ENCODE measurements at regions of chr7 and their contacts with region 1.

Region 1: DNA sequence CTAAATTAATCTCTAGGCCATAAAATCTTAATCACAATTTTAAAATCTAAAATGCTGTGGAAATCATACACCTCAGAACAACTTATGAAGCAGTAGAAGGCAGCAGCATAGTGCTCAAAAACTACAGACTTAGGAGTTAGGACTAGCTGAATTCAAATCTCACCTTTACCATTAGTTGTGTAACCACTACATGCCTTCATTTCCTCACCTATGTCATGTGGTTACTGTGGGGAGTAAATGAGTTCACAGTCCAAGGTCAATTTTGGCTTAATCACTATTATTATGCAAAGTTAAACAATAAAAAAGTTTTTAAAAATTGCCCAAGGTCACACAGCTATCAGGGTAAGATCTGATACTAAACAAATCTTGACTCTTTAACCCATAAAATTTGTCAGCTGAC is 37.0 kb downstream of the SNX13 start:
- DNase-seq: no peak
- H3K4me3 ChIP-seq: no peak overlapping the region
- CTCF ChIP-seq: no peak
- POLR2A ChIP-seq: no peak

Region 2: GRCh38 chr7:16106300-16106699 is 1797.0 kb before region 1 on chr7:
- intact Hi-C with region 1: loop called (anchors 5 kb)
- DNase-seq: no peak
- H3K4me3 ChIP-seq: no peak overlapping the region
- CTCF ChIP-seq: no peak
- POLR2A ChIP-seq: no peak

Region 3: GRCh38 chr7:17745610-17746009 is 157.7 kb before region 1 on chr7:
- intact Hi-C with region 1: no loop called
- DNase-seq: no peak
- H3K4me3 ChIP-seq: no peak overlapping the region
- CTCF ChIP-seq: no peak
- POLR2A ChIP-seq: no peak

Region 4: DNA sequence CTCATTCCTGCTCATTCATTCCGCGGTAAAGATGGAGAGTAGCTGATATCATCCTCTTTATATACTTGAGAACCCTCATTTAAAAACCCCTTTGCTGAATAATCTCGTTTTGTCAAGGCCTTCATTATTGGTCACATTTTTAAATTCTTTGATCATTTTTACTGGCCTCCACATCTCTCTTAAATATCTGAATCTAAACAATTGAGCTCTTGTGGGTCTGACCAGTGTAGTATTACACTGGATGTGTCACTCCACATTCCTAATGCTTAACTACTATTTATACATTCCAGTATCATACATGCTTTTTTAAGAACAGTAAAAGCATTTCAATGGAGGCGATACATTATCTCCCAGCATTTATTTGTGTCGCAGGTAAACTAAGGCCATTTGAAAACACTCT is 136.9 kb after region 1 on chr7:
- intact Hi-C with region 1: no loop called
- DNase-seq: no peak
- H3K4me3 ChIP-seq: no peak overlapping the region
- CTCF ChIP-seq: no peak
- POLR2A ChIP-seq: no peak

Region 5: DNA sequence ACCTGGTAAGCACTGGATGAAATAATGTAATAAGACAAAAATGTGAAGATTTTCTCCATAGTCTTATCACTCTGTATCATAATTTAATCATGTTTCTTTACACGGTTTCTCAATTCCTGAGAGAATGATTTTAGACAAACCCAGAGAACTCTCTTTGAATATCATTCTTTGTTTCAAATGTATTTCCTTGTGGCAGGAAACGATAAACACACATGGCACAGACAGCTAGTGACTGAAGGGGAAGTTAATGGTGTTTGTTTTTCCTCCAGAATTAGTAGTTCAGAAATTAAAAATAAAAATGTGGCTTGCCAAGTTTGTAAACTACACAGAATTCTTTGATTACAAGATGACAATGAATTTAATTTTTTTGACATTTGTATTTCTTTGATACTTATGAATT is 288.0 kb after region 1 on chr7:
- intact Hi-C with region 1: no loop called
- DNase-seq: no peak
- H3K4me3 ChIP-seq: no peak overlapping the region
- CTCF ChIP-seq: no peak
- POLR2A ChIP-seq: no peak

Region 6: DNA sequence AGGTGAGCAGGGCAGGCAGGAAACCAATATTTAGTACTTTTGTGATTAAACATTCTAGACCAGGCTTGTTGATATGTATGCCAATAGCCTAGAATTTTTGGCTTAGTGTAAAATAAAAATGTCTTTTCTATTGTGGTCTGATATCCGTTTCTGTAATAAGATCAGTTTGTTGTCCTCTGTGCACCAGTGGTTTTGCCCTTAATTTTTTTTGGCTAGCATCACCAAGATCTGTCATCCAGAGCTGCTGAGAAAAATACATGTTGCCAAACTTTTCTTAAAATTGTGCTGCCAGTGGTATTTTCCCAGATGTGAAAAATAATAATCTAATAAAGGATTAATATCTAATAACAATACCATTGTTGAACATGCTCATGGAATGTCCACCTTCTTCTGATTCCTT is 1098.5 kb after region 1 on chr7:
- intact Hi-C with region 1: no loop called
- DNase-seq: no peak
- H3K4me3 ChIP-seq: no peak overlapping the region
- CTCF ChIP-seq: no peak
- POLR2A ChIP-seq: no peak